ENCODE measurements at regions of chrX and their contacts with region 1.

Region 1: DNA sequence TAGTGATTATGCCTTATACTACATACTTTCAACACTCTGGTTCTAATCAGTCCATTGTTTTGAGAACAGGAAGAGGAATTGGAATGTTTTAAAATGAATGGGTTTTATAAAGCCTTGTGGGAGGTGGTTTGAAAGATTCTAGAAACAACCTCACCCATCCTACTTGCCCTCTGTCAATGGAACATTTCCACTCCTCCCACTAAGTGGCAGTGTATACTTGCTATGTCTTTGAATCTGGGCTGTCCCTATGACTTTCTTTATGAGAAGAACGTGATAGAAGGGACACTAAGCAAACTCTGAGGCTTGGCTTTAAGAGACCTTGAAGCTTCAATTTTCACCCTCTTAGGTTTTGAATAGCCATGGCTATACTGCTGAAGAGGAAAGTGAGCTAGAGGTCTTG is 611.2 kb downstream of the PPP4R3C start:
- DNase-seq: peak; percentile 23
- ATAC-seq: peak; percentile 86
- H3K4me3 ChIP-seq: no peak overlapping the region
- H3K27ac ChIP-seq: no peak overlapping the region
- H3K4me1 ChIP-seq: no peaks in the 10 kb centered on the region
- H3K27me3 ChIP-seq: no peaks in the 10 kb centered on the region
- CTCF ChIP-seq: peak; percentile 13 to 36 (median 15); a peak in 3 of 6 replicates
- POLR2A ChIP-seq: no peak
- RAD21 ChIP-seq: peak; percentile 52

Region 2: DNA sequence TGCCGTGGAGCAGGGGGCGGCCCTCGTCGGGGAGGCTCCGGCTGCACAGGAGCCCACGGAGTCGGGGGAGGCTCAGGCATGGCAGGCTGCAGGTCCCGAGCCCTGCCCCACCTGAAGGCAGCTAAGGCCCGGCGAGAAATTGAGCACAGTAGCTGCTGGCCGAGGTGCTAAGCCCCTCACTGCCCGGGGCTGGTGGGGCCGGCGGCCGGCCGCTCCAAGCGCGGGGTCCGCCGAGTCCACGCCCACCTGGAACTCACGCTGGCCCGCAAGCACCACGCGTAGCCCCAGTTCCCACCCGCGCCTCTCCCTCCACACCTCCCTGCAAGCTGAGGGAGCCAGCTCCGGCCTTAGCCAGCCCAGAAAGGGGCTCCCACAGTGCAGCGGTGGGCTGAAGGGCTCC is 21.8 kb after region 1 on chrX:
- CTCF ChIA-PET with region 1: no interaction called
- POLR2A ChIA-PET with region 1: no interaction called
- RAD21 ChIA-PET with region 1: no interaction called
- intact Hi-C with region 1: no loop called
- DNase-seq: no peak
- ATAC-seq: no peak
- H3K4me3 ChIP-seq: no peak overlapping the region
- H3K27ac ChIP-seq: no peak overlapping the region
- H3K4me1 ChIP-seq: no peaks in the 10 kb centered on the region
- H3K27me3 ChIP-seq: no peaks in the 10 kb centered on the region
- CTCF ChIP-seq: no peak
- POLR2A ChIP-seq: no peak
- RAD21 ChIP-seq: no peak

Region 3: GRCh38 chrX:26918633-26919032 is 66.7 kb after region 1 on chrX:
- CTCF ChIA-PET with region 1: interaction called, 6 read pairs
- POLR2A ChIA-PET with region 1: no interaction called
- RAD21 ChIA-PET with region 1: no interaction called
- intact Hi-C with region 1: loop called (anchors 5 kb)
- DNase-seq: peak; percentile 12
- ATAC-seq: peak; percentile 90
- H3K4me3 ChIP-seq: no peak overlapping the region
- H3K27ac ChIP-seq: no peak overlapping the region
- H3K4me1 ChIP-seq: no peaks in the 10 kb centered on the region
- H3K27me3 ChIP-seq: no peaks in the 10 kb centered on the region
- CTCF ChIP-seq: peak; percentile 26 to 62 (median 52); a peak in 5 of 6 replicates
- POLR2A ChIP-seq: no peak
- RAD21 ChIP-seq: peak; percentile 50

Region 4: GRCh38 chrX:27186664-27187063 is 334.7 kb after region 1 on chrX:
- CTCF ChIA-PET with region 1: no interaction called
- POLR2A ChIA-PET with region 1: no interaction called
- RAD21 ChIA-PET with region 1: no interaction called
- intact Hi-C with region 1: loop called (anchors 2 kb)
- DNase-seq: peak; percentile 3
- ATAC-seq: peak; percentile 25; the same call in 1 of the 2 replicates
- H3K4me3 ChIP-seq: no peak overlapping the region
- H3K27ac ChIP-seq: no peak overlapping the region
- H3K4me1 ChIP-seq: no peaks in the 10 kb centered on the region
- H3K27me3 ChIP-seq: no peaks in the 10 kb centered on the region
- CTCF ChIP-seq: peak; percentile 19 to 67 (median 53); a peak in 5 of 6 replicates
- POLR2A ChIP-seq: no peak
- RAD21 ChIP-seq: peak; percentile 51

Region 5: DNA sequence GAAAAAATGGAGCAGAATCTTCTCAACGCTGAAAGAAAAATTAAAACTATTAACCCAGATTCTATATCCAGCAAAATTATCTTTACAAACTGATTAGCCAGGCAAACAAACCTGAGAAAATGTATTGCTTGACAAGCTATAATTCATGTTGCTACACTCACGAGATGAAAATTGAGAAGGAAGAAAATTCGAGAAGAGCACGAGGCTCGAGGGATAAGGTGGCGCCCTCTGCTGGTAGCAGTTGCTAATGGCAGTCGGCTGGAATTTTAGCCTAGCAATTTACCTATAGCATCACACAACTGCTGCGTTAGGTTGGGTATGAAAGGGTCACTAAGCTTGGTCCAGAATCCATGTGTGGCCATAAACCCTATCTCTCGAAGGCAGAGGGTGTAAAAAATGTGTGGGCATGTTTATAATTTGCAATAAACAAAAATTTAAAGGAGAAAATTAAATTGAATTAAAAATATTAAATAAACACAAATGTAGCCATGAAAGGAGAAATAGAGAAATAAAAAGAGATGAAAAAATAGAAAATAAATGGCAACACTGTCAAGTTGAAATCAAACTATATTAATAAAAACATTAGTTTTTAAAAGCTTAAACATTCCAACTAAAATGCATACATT is 484.6 kb after region 1 on chrX:
- CTCF ChIA-PET with region 1: no interaction called
- POLR2A ChIA-PET with region 1: no interaction called
- RAD21 ChIA-PET with region 1: no interaction called
- intact Hi-C with region 1: loop called (anchors 5 kb)
- DNase-seq: peak; percentile 3
- ATAC-seq: no peak
- H3K4me3 ChIP-seq: no peak overlapping the region
- H3K27ac ChIP-seq: no peak overlapping the region
- H3K4me1 ChIP-seq: no peaks in the 10 kb centered on the region
- H3K27me3 ChIP-seq: no peaks in the 10 kb centered on the region
- CTCF ChIP-seq: peak; percentile 23 to 74 (median 66); a peak in 5 of 6 replicates
- POLR2A ChIP-seq: no peak
- RAD21 ChIP-seq: peak; percentile 37

Region 6: DNA sequence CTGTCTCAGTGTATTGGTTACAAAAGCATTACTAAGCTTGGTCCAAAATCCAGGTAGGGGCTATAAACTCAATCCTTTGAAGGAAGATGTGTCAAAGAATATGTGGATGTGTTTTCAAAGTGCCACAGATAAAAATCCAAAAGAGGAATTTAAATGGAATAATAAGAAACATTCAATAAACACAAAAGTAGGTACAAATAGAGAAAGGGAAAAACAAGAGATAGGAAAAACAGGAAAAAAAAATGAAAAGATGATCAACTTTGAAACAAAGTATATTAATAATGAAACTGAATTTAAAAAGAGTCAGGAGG is 547.1 kb after region 1 on chrX:
- CTCF ChIA-PET with region 1: no interaction called
- POLR2A ChIA-PET with region 1: no interaction called
- RAD21 ChIA-PET with region 1: no interaction called
- intact Hi-C with region 1: loop called (anchors 10 kb)
- DNase-seq: no peak
- ATAC-seq: no peak
- H3K4me3 ChIP-seq: peak overlapping the region; percentile 57 to 66
- H3K27ac ChIP-seq: no peak overlapping the region
- H3K4me1 ChIP-seq: no peaks in the 10 kb centered on the region
- H3K27me3 ChIP-seq: no peaks in the 10 kb centered on the region
- CTCF ChIP-seq: no peak
- POLR2A ChIP-seq: no peak
- RAD21 ChIP-seq: no peak

Measured in HCT116 (cell line).